GM12878 (cell line): ENCODE measurements at regions of chr14 and their contacts with region 1.

Region 1: DNA sequence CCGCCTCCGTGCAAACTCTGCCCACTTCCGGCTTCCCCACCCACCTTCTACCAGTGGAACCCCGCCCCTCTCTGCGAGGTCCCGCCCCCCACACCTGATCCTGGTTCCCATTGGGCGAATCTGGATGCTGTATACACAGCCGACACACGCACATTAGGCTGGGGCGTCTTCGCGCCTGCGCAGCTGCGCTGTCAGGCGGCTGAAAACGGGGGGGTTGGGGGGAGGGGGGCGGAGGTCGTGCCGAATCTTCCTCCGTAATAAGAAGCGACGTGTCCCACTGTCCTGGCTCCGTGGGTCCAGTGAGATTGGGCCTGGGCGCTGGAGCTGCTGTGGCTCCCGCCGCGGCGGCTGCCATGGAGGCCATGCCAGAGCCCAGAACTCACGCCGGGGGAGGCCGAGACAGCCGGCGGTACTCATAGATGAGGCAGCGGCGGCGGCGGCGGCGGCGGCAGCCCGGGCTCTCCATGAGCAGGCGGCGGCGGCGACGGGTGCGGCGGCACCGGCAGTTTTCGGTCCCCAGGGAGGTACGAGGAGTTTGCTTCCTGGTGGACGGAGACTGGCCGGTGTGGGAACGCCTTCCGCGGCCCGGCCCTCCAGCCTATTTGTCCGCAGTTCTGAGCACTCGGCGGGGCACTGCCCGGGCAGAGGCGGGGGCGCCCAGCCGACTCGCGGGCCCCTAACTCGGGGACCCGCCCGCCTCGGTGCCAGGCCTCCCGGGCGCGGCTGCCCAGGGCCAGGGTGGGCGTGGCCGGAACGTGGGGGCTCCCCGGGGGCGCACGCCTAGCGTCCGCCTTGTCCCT is 64.5 kb downstream of the KLHL28 start:
- DNase-seq: peak; percentile 89
- ATAC-seq: peak; percentile 97
- H3K4me3 ChIP-seq: peak overlapping the region; percentile 69
- H3K27ac ChIP-seq: peak overlapping the region; percentile 79
- H3K4me1 ChIP-seq: no peaks in the 10 kb centered on the region
- H3K27me3 ChIP-seq: no peaks in the 10 kb centered on the region
- CTCF ChIP-seq: no peak
- EP300 ChIP-seq: no peak
- POLR2A ChIP-seq: peak; percentile 83
- RAD21 ChIP-seq: no peak

Region 2: DNA sequence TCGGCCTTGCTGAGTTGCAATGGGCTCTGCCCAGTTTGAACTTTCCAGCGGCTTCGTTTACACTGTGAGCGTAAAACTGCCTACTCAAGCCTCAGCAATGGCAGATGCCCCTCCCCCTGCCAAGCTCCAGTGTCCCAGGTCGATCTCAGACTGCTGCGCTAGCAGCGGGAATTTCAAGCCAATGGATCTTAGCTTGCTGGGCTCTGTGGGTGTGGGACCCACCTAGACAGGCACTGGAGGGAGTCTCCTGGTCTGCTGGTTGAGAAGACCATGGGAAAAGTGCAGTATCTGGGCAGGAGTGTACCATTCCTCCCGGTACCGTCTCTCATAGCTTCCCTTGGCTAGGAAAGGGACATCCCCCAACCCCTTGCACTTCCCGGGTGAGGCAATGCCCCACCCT is 23.7 kb before region 1 on chr14:
- CTCF ChIA-PET with region 1: no interaction called
- POLR2A ChIA-PET with region 1: no interaction called
- RAD21 ChIA-PET with region 1: no interaction called
- SMC1A ChIA-PET with region 1: no interaction called
- in situ Hi-C with region 1: no loop called
- intact Hi-C with region 1: no loop called
- DNase-seq: no peak
- ATAC-seq: no peak
- H3K4me3 ChIP-seq: no peak overlapping the region
- H3K27ac ChIP-seq: no peak overlapping the region
- H3K4me1 ChIP-seq: no peaks in the 10 kb centered on the region
- H3K27me3 ChIP-seq: no peaks in the 10 kb centered on the region
- CTCF ChIP-seq: no peak
- EP300 ChIP-seq: no peak
- POLR2A ChIP-seq: no peak
- RAD21 ChIP-seq: no peak

Region 3: DNA sequence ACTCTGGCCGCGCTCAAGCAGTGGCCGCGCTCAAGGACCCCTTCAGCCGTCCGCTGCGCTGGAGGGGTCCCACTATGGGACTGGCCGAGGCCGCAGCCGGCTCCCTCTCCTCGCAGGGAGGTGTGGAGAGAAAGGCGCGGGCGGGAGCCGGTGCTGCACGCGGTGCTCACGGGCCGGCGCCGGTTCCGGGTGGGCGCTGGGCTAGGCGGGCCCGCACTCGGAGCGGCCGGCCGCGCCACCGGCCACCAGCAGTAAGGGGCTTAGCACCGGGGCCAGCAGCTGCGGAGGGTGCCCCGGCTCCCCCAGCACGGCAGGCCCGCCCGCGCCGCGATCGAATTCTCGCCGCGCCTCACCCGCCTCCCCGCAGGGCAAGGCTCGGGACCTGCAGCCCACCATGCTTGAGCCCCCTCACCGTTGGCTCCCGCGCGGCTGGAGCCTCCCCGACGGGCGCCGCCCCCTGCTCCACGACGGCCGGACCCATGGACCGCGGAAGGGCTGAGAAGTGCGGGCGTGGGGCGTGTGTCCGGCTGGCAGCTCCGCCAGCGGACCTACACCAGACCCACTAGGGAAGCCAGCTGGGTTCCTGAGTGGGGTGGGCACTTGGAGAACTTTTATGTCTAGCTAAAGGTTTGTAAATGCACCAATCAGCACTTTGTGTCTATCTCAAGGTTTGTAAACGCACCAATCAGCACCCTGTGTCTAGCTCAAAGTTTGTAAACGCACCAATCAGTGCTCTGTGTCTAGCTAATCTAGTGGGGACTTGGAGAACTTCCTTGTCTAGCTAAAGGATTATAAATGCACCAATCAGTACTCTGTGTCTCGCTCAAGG is 15.0 kb after region 1 on chr14:
- CTCF ChIA-PET with region 1: interaction called, 10 read pairs
- POLR2A ChIA-PET with region 1: interaction called, 4 read pairs
- RAD21 ChIA-PET with region 1: interaction called, 3 read pairs
- SMC1A ChIA-PET with region 1: interaction called, 5 read pairs
- in situ Hi-C with region 1: no loop called
- intact Hi-C with region 1: no loop called
- DNase-seq: no peak
- ATAC-seq: no peak
- H3K4me3 ChIP-seq: no peak overlapping the region
- H3K27ac ChIP-seq: no peak overlapping the region
- H3K4me1 ChIP-seq: no peaks in the 10 kb centered on the region
- H3K27me3 ChIP-seq: no peaks in the 10 kb centered on the region
- CTCF ChIP-seq: no peak
- EP300 ChIP-seq: no peak
- POLR2A ChIP-seq: no peak
- RAD21 ChIP-seq: no peak

Region 4: GRCh38 chr14:45089813-45090212 is 192.6 kb after region 1 on chr14:
- CTCF ChIA-PET with region 1: no interaction called
- POLR2A ChIA-PET with region 1: interaction called, 4 read pairs
- RAD21 ChIA-PET with region 1: no interaction called
- SMC1A ChIA-PET with region 1: interaction called, 3 read pairs
- in situ Hi-C with region 1: no loop called
- intact Hi-C with region 1: loop called (anchors 5 kb)
- DNase-seq: no peak
- ATAC-seq: peak; percentile 71
- H3K4me3 ChIP-seq: peak overlapping the region; percentile 44
- H3K27ac ChIP-seq: peak overlapping the region; percentile 3; the same call in 1 of the 2 replicates
- H3K4me1 ChIP-seq: peaks cover 16% of the 10 kb centered on the region
- H3K27me3 ChIP-seq: no peaks in the 10 kb centered on the region
- CTCF ChIP-seq: no peak
- EP300 ChIP-seq: peak; percentile 16 to 24; a peak in 1 of 4 replicates
- POLR2A ChIP-seq: no peak
- RAD21 ChIP-seq: no peak

Region 5: DNA sequence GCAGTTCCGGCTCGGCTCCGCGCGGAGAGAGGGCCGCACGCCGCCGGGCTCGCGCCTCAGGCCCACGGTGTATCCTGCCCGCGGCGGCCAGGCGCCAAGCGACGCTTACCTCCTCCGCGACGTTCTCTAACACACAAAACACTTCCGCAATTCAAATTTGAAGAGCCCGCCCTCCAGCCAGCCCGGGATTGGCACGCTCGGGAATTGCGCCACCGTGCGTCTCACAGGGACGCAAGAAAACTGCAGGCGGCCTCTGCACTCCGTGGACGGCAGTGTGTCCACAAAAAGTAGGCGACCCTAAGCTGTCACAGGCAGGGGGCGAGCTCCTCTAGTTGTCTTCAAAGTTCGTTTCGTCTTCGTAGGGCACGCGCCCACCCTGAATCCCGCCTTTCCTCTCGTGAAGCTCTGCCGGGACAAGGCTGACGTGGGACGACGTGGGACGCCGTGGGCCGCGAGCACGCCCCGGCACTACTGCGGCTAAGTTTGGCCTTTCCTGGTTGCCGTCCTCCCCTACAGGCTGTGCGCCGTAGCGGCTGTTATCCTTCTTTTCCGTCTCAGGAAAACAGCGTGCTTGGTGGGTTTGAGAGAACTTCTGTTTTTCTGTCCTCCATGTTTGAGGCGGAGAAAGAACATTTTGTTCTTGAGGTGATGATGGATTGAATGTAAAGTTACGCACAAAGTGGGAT is 356.0 kb after region 1 on chr14 and contains the start of gene MIS18BP1:
- CTCF ChIA-PET with region 1: interaction called, 9 read pairs
- POLR2A ChIA-PET with region 1: interaction called, 3 read pairs
- RAD21 ChIA-PET with region 1: no interaction called
- SMC1A ChIA-PET with region 1: interaction called, 8 read pairs
- in situ Hi-C with region 1: no loop called
- intact Hi-C with region 1: loop called (anchors 5 kb)
- DNase-seq: peak; percentile 81
- ATAC-seq: peak; percentile 85
- H3K4me3 ChIP-seq: peak within 1 kb of the TSS; percentile 98
- H3K27ac ChIP-seq: peak within 1 kb of the TSS; percentile 85
- H3K4me1 ChIP-seq: peaks cover 8% of the 10 kb centered on the region
- H3K27me3 ChIP-seq: no peaks in the 10 kb centered on the region
- CTCF ChIP-seq: peak; percentile 80 to 95 (median 90)
- EP300 ChIP-seq: peak in 1 of 2 experiments; percentile 62; a peak in 1 of 4 replicates
- POLR2A ChIP-seq: peak; percentile 82
- RAD21 ChIP-seq: peak; percentile 49
- polyA plus RNA-seq, gene MIS18BP1: 16.9 to 17.7 TPM